Activated B cell treated with CpG ODN at 0.5 μM for 24 hours (primary cell): ENCODE measurements at regions of chr9 and their contacts with region 1.

Region 1: DNA sequence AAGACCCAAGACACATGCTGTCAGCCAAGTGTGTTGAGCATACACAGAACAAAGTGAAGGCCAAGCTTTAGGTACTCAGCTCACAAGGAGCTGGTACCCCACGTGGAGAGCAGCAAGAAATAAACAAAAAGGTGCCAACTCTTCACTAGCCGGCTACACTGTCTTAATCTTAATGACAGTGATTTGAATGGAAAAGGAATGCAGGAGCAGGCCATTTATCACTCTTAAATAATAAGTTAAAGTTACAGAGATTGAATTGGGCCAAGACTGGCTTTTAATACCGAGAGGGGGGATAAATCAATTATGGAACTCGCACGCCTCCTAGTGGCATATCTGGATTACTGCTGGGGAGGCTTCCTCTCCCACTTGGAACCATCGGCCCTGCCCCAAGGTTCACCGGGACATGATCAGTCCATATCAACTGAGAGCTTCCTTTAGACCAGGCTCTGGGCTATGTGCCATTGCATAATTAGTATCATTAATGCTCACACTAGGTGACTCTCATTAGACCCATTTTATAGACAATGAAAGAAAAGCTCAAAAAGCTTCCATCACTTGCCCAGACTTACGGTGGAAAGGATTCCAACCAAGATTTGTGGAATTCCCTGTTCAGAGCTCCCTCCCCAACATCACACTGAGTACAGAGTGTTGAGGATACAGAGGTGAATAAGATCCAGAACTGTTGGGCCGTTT is 94.0 kb downstream of the ACTL7B start:
- DNase-seq: no peak
- ATAC-seq: peak; percentile 40
- H3K4me3 Mint-ChIP-seq: no peak overlapping the region
- H3K27ac Mint-ChIP-seq: no peak overlapping the region
- H3K4me1 Mint-ChIP-seq: peaks cover 9% of the 10 kb centered on the region
- H3K27me3 Mint-ChIP-seq: peaks cover 2% of the 10 kb centered on the region
- CTCF ChIP-seq: peak; percentile 68

Region 2: DNA sequence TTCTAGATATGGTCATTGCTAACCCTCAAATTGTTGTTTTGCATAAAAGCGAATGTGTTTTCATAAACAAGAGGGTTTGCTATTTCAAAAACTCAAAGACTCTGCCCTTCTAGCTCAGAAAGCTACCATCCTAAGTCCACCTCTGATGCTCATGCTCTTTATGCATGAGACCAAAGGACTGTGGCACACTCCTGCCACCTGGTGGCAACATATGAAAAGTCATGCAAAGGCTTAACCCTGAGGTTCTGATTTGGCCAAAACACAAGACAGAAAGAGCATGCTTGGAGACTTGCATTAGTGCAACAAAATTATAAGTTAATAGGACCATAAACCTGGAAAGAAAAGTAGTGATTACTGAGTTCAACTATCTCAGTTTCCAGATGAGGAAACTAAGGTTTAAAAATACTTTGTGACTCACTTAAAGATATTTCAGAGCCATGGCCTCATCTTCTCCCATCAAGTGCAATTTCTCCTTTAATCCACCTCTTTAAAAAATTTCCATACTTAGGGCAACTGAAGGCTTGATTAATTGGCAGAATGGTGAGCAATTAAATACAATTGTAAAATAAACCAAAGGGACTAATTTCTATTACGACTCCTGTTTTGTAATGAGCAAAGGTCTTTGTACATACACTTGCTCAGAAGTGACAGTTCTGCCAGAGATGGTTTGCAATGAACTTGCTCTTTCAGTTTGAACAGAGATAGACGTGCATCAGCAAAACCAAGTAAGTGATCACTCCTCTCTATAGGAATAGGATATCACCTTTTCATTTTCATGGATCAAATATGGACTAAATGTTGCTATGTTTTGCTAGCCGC is 1589.4 kb before region 1 on chr9:
- CTCF ChIA-PET with region 1: no interaction called
- POLR2A ChIA-PET with region 1: no interaction called
- intact Hi-C with region 1: loop called (anchors 10 kb)
- DNase-seq: peak; percentile 18
- ATAC-seq: peak; percentile 52
- H3K4me3 Mint-ChIP-seq: no peak overlapping the region
- H3K27ac Mint-ChIP-seq: no peak overlapping the region
- H3K4me1 Mint-ChIP-seq: no peaks in the 10 kb centered on the region
- H3K27me3 Mint-ChIP-seq: peaks cover 17% of the 10 kb centered on the region
- CTCF ChIP-seq: peak; percentile 45

Region 3: GRCh38 chr9:107465467-107466451 is 1296.0 kb before region 1 on chr9:
- CTCF ChIA-PET with region 1: interaction called, 10 read pairs
- POLR2A ChIA-PET with region 1: no interaction called
- intact Hi-C with region 1: loop called (anchors 1 kb)
- DNase-seq: peak; percentile 50
- ATAC-seq: peak; percentile 90
- H3K4me3 Mint-ChIP-seq: peak overlapping the region; percentile 67
- H3K27ac Mint-ChIP-seq: no peak overlapping the region
- H3K4me1 Mint-ChIP-seq: peaks cover 8% of the 10 kb centered on the region
- H3K27me3 Mint-ChIP-seq: peaks cover 30% of the 10 kb centered on the region
- CTCF ChIP-seq: no peak

Region 4: DNA sequence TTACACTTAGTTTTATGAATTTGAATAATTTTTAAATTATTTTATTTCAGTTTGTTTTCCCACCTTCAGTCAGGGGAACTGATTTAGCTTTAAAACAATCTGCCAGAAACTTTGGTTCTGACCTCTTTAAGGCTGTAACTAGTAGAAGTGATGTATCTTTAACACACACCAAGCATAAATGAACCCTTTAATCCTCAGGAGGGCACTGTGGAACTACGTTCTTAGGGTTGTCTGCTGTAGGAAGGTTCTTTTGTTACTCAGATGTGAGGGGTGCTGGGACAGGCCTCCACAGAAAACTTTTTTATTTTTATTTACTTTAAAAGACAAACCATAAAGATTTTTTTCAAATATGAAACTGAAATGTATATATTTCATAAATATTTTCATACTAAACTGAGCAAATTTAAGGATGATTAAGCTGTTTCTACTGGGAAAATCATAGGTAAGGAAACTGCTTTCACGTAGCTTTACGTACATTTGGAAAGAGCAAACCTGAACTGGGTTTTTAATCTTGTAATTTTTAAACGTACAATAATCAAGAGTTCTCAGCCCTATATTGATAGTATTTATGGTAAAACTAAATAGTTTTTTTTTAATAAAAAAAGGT is 1277.6 kb before region 1 on chr9:
- CTCF ChIA-PET with region 1: interaction called, 3 read pairs
- POLR2A ChIA-PET with region 1: interaction called, 4 read pairs
- intact Hi-C with region 1: loop called (anchors 1 kb)
- DNase-seq: no peak
- ATAC-seq: peak; percentile 45
- H3K4me3 Mint-ChIP-seq: no peak overlapping the region
- H3K27ac Mint-ChIP-seq: no peak overlapping the region
- H3K4me1 Mint-ChIP-seq: peaks cover 10% of the 10 kb centered on the region
- H3K27me3 Mint-ChIP-seq: peaks cover 20% of the 10 kb centered on the region
- CTCF ChIP-seq: no peak

Region 5: GRCh38 chr9:108565651-108566378 is 196.0 kb before region 1 on chr9:
- CTCF ChIA-PET with region 1: no interaction called
- POLR2A ChIA-PET with region 1: no interaction called
- intact Hi-C with region 1: loop called (anchors 2 kb)
- DNase-seq: no peak
- ATAC-seq: no peak
- H3K4me3 Mint-ChIP-seq: no peak overlapping the region
- H3K27ac Mint-ChIP-seq: no peak overlapping the region
- H3K4me1 Mint-ChIP-seq: no peaks in the 10 kb centered on the region
- H3K27me3 Mint-ChIP-seq: peaks cover 6% of the 10 kb centered on the region
- CTCF ChIP-seq: no peak